Activated CD4-positive, alpha-beta T cell treated with anti-CD3 and anti-CD28 coated beads for 36 hours (primary cell): ENCODE measurements at regions of chr15 and their contacts with region 1.

Region 1: GRCh38 chr15:40367686-40368611 is 9.9 kb downstream of the DISP2 start:
- DNase-seq: peak; percentile 94
- ATAC-seq: peak; percentile 98
- H3K4me3 Mint-ChIP-seq: peak overlapping the region; percentile 74
- H3K27ac Mint-ChIP-seq: peak overlapping the region; percentile 51
- H3K4me1 Mint-ChIP-seq: peaks cover 8% of the 10 kb centered on the region
- H3K27me3 Mint-ChIP-seq: no peaks in the 10 kb centered on the region

Region 2: DNA sequence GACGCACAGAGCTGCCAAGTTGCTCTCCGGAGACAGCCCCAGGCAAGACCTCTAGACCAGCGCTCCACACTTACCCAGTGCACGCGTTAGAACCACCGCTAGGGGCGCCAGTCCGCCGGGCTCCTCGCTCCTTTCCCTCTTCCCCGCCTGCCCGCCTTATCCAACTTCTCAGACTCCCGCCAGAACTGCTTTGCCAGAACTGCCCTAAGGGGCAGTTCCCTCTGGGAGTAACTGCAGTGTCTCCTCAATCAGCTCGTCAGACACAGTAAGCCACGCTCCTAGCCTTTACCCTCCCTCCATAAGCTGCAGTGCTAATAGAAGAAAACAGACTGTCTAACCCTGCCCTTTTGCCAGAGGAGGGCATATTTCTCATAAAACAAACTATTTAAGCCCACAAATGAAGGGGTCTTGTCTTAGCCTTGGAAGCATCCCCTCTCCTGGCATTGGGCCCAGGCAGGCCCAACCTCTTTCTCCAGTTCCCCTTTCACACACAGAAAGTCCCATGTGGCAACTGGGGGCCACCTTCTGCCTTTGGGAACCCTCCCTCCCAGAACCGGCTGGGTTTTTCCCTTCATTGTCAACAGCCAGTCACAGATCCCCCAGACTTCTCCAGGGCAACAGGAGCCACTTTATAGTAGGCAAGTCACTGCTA is 263.0 kb before region 1 on chr15:
- CTCF ChIA-PET with region 1: no interaction called
- POLR2A ChIA-PET with region 1: no interaction called
- intact Hi-C with region 1: no loop called
- DNase-seq: peak; percentile 90
- ATAC-seq: peak; percentile 38
- H3K4me3 Mint-ChIP-seq: peak overlapping the region; percentile 78
- H3K27ac Mint-ChIP-seq: peak overlapping the region; percentile 94
- H3K4me1 Mint-ChIP-seq: peaks cover 79% of the 10 kb centered on the region
- H3K27me3 Mint-ChIP-seq: no peaks in the 10 kb centered on the region

Region 3: DNA sequence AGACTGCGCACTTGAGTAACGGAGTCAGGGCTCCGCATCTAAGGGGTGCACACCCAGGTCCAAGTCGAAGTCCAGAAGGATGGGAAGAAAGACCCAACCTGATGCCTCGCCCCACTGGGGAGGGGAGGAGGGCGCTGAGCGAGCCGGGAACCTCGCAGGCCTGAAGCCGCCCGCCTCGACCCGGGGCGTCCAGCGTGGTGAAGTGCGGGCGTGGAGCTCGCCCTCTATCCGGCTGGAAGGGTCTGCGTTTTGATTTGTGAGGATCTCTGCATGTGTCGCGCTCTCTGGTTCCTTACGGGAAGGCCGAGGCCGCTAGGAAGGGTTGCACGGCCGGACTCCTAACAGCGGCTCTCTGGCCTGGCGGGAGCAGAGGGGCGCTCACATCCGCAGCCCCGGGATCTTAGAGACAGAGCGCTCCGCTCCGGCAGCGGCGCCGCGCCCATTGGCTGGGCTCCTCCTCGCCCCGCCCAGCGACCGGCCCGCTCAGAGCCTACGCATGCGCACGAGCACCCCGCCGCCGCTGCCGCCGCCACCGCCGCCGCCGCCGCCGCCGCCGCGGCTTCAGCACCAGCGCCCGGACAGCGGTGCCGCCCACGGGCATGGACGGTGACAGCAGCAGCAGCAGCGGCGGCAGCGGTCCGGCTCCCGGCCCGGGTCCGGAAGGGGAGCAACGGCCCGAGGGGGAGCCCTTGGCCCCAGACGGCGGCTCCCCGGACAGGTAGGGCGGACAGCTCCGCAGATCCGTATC is 10.1 kb before region 1 on chr15 and contains the start of gene DISP2:
- CTCF ChIA-PET with region 1: interaction called, 5 read pairs
- POLR2A ChIA-PET with region 1: no interaction called
- intact Hi-C with region 1: loop called in 1 of 2 experiments (anchors 1 kb)
- DNase-seq: peak; percentile 93
- ATAC-seq: peak; percentile 94
- H3K4me3 Mint-ChIP-seq: peak within 1 kb of the TSS; percentile 67
- H3K27ac Mint-ChIP-seq: peak within 1 kb of the TSS; percentile 20
- H3K4me1 Mint-ChIP-seq: peaks cover 3% of the 10 kb centered on the region
- H3K27me3 Mint-ChIP-seq: peaks cover 7% of the 10 kb centered on the region
- total RNA-seq, gene DISP2: 0.02 to 0.04 TPM

Region 4: DNA sequence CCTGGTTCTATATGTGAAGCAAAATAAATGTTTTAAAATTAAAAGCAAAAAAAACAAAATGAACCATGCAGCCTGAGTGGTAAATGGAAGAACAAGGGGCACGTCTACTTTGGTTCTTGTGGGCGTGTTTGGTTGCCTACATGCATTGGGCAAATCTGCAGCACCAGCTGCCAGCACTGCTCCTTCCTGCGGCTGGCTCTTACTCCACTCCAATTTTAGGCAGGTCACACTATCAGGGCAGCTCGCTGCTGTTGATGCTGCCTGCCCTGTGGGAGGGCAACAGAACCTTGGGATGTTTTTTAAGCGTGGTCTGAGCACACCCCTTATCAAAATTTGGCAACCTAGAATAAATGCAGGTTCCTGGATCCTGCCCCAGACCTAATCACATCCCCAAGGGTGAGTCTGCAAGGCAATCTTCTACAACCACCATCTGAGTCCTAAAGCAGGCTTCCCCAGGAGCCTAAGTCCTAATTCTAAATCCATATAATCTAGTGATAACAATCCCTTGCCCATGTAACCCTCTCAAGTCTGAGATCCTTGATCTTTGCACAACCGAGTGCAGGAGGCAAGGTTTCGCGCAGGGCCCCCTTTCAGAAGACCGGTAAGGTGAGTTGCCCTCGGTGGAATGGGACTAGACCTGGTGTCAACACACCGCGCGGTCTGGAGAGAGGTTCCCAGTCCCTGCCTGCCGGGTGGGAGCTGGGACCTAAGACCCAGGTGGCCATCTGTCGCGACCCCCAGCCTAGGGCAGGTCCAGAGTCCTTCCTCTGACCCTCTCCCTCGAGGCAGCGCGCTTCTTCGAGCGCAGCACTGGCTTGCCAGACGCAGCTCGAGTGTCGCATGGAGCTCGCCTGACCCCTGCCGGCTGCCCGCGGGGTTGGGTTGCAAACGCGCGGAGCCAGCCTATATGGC is 53.6 kb after region 1 on chr15:
- CTCF ChIA-PET with region 1: interaction called, 13 read pairs
- POLR2A ChIA-PET with region 1: no interaction called
- intact Hi-C with region 1: loop called (anchors 1 kb)
- DNase-seq: peak; percentile 91
- ATAC-seq: peak; percentile 98
- H3K4me3 Mint-ChIP-seq: no peak overlapping the region
- H3K27ac Mint-ChIP-seq: no peak overlapping the region
- H3K4me1 Mint-ChIP-seq: no peaks in the 10 kb centered on the region
- H3K27me3 Mint-ChIP-seq: no peaks in the 10 kb centered on the region

Region 5: GRCh38 chr15:40793216-40793989 is 425.5 kb after region 1 on chr15:
- CTCF ChIA-PET with region 1: no interaction called
- POLR2A ChIA-PET with region 1: no interaction called
- intact Hi-C with region 1: no loop called
- DNase-seq: peak; percentile 74
- ATAC-seq: peak; percentile 79
- H3K4me3 Mint-ChIP-seq: no peak overlapping the region
- H3K27ac Mint-ChIP-seq: peak overlapping the region; percentile 38
- H3K4me1 Mint-ChIP-seq: peaks cover 29% of the 10 kb centered on the region
- H3K27me3 Mint-ChIP-seq: no peaks in the 10 kb centered on the region